Right ventricle myocardium inferior (tissue), 1 donor: ENCODE measurements at regions of chr10 and their contacts with region 1.

Region 1: DNA sequence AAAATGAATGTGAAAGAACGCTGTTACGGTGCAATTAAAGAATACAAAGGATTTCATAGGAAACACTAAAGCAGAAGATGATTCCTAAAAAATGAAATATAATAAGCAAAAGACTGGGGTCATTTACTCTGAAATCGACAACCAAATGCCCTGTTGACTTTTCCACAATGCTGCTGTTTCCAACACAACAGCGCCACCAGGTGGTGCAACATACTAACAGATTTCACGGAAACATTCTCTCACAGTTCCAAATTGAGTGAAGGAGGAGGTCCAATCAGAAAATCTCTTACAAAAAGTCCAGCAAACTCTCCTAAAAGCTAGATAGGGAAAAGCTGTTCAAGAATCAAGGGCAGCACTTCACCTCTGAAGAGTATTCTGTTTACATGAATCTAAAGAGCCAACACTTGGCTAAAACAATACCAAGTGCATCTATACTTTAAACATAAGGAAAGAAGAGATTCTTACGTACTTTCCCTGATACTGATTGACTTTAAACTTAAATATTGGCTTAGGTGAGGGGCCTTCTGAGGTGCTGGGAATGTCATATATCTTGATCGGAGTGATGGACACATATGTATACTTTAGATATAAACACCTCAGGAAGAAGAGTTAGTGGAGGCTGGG is 55.9 kb downstream of the UPF2 start:
- DNase-seq: peak; percentile 82
- ATAC-seq: peak; percentile 46

Region 2: GRCh38 chr10:11782793-11783557 is 203.7 kb before region 1 on chr10:
- intact Hi-C with region 1: loop called (anchors 2 kb)
- DNase-seq: no peak
- ATAC-seq: no peak

Region 3: DNA sequence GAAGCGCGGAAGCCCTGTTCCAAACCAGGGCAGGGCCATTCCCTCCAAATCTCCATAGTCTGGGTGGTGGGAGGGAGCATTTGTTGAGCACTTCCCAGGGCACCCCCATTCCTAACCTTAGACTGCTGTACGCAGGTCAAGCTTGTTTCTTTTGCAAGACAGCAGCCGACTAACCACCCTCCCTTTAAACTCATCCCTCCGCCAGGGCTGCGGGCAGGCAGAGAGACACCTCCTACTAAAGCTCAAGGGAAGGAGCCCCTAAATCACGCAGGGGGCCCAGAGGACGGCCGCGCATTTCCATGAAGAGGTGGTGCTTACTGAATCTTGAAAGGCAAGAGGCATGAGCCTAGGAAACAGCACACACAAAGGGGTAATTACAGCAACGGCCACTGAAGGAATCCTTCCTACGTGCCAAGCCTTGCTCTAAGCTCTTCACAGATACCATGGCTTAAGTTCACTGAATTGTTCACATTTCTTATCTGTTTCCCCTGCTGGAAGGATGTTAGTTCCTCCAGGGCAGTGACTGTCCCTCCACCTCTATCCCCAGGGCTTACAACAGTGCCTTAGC is 73.5 kb before region 1 on chr10:
- intact Hi-C with region 1: no loop called
- DNase-seq: no peak
- ATAC-seq: no peak